HepG2 (cell line): ENCODE measurements at regions of chr12 and their contacts with region 1.

Region 1: GRCh38 chr12:117119592-117120198 is 20.5 kb upstream of the TESC start:
- DNase-seq: peak; percentile 59
- ATAC-seq: peak; percentile 81
- H3K4me3 ChIP-seq: peak overlapping the region in 1 of 3 experiments; percentile 53; a peak in 1 of 6 replicates
- H3K27ac ChIP-seq: no peak overlapping the region
- H3K4me1 ChIP-seq: peaks cover 49% of the 10 kb centered on the region
- H3K27me3 ChIP-seq: no peaks in the 10 kb centered on the region
- CTCF ChIP-seq: peak; percentile 85
- EP300 ChIP-seq: no peak
- POLR2A ChIP-seq: no peak
- RAD21 ChIP-seq: peak; percentile 77

Region 2: GRCh38 chr12:116703214-116703795 is 416.4 kb before region 1 on chr12:
- CTCF ChIA-PET with region 1: interaction called, 3 read pairs
- POLR2A ChIA-PET with region 1: no interaction called
- in situ Hi-C with region 1: loop called (anchors 10 kb)
- intact Hi-C with region 1: loop called (anchors 10 kb)
- DNase-seq: peak; percentile 62
- ATAC-seq: peak; percentile 76
- H3K4me3 ChIP-seq: no peak overlapping the region
- H3K27ac ChIP-seq: no peak overlapping the region
- H3K4me1 ChIP-seq: peaks cover 7% of the 10 kb centered on the region; the same call in 1 of the 2 replicates
- H3K27me3 ChIP-seq: no peaks in the 10 kb centered on the region
- CTCF ChIP-seq: peak; percentile 92
- EP300 ChIP-seq: no peak
- POLR2A ChIP-seq: no peak
- RAD21 ChIP-seq: peak; percentile 86

Region 3: GRCh38 chr12:117025481-117026151 is 94.1 kb before region 1 on chr12:
- CTCF ChIA-PET with region 1: interaction called, 50 read pairs
- POLR2A ChIA-PET with region 1: interaction called, 4 read pairs
- in situ Hi-C with region 1: loop called (anchors 5 kb)
- intact Hi-C with region 1: loop called (anchors 1 kb)
- DNase-seq: peak; percentile 68
- ATAC-seq: peak; percentile 84
- H3K4me3 ChIP-seq: no peak overlapping the region
- H3K27ac ChIP-seq: no peak overlapping the region
- H3K4me1 ChIP-seq: peaks cover 7% of the 10 kb centered on the region; the same call in 1 of the 2 replicates
- H3K27me3 ChIP-seq: no peaks in the 10 kb centered on the region
- CTCF ChIP-seq: peak; percentile 91
- EP300 ChIP-seq: no peak
- POLR2A ChIP-seq: no peak
- RAD21 ChIP-seq: peak; percentile 92

Region 4: DNA sequence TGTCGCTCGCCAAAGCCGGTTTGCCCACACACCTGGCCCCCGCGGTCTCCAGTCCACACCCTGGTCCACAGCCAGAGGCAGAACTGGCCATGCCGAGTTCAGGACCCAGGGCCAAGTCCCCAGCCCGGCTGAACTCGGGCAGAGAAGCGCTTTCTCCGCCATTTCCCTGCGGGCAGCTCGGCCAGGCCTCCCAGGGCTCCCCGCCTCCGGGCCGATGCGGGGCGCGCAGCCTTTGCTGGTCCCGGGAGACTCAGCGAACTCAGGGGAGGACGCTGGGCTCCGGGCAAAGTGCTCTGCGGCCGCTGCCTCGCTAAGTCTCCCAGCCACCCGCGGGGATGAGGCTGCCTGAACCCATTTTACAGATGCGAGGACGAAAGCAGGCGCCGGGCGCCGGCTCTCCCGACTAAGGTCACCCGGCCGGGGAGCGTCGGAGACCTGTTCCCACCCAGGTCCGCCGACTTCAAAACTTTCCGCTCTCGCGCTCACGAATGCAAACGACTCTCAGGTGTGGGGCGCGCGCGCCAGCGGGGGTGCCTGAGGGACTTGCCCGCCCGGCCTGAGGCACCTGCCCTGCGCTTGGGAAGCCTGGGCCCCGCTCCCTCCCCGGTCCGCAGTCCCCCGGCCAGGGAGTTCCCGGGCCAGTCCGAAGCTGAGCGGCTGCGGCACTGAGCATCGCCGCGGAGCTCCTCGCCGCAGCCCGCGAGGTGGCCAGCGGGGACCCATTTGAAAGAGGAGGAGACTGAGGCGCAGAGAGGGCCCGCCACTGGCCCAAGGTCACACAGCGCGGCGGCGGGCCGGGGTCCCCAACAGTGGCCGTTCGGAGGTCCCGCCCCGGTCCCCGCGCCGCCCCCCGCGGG is 21.1 kb before region 1 on chr12:
- CTCF ChIA-PET with region 1: interaction called, 8 read pairs
- POLR2A ChIA-PET with region 1: no interaction called
- in situ Hi-C with region 1: no loop called
- intact Hi-C with region 1: loop called (anchors 2 kb)
- DNase-seq: no peak
- ATAC-seq: peak; percentile 30
- H3K4me3 ChIP-seq: peak overlapping the region; percentile 89 to 92 (median 91)
- H3K27ac ChIP-seq: peak overlapping the region; percentile 40
- H3K4me1 ChIP-seq: peaks cover 78% of the 10 kb centered on the region
- H3K27me3 ChIP-seq: no peaks in the 10 kb centered on the region; a peak in 1 of 5 replicates
- CTCF ChIP-seq: no peak
- EP300 ChIP-seq: no peak
- POLR2A ChIP-seq: no peak
- RAD21 ChIP-seq: no peak

Region 5: DNA sequence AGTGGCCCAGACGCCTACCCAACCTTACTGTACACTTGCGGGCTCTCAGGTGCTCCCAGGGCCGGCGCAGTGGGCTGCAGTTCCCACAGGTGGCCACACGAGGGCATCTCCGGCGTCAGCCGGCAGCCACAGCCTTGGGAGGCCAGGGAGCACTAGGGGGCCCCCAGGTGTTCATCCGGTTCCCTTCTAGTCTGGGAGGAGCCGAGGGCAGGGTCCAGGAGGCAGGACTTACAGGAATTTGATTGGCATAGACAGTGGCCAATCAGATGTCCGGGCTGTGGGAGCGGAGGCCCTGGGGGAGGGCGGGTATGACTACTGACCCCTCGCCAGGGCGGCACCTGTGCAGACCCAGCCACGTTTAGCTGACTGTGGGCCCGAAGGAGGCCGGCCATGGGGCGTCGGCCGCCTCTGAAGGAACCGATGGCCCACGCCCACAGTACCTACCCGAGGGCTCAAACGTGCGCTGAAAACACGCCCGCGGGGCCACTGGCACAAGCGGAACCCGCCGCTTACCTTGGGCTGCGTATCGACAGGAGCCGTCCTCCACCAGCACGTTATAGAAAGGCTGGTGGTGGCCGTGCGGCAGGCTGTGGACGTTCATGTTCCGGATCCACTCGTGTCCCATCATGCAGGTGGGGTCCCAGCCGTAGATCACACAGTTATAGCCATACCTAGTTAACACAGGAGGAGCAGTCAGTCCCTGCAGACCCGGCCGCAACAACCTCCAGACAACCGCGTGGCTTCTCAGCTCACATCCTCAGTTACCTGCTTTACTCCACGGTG is 35.8 kb after region 1 on chr12:
- CTCF ChIA-PET with region 1: no interaction called
- POLR2A ChIA-PET with region 1: no interaction called
- in situ Hi-C with region 1: no loop called
- intact Hi-C with region 1: loop called (anchors 1 kb)
- DNase-seq: peak; percentile 95
- ATAC-seq: peak; percentile 99
- H3K4me3 ChIP-seq: no peak overlapping the region
- H3K27ac ChIP-seq: no peak overlapping the region
- H3K4me1 ChIP-seq: peaks cover 11% of the 10 kb centered on the region
- H3K27me3 ChIP-seq: no peaks in the 10 kb centered on the region
- CTCF ChIP-seq: peak; percentile 97
- EP300 ChIP-seq: peak in 1 of 2 experiments; percentile 30; a peak in 1 of 4 replicates
- POLR2A ChIP-seq: no peak
- RAD21 ChIP-seq: peak; percentile 80